ENCODE measurements at regions of chr10 and their contacts with region 1.

Region 1: DNA sequence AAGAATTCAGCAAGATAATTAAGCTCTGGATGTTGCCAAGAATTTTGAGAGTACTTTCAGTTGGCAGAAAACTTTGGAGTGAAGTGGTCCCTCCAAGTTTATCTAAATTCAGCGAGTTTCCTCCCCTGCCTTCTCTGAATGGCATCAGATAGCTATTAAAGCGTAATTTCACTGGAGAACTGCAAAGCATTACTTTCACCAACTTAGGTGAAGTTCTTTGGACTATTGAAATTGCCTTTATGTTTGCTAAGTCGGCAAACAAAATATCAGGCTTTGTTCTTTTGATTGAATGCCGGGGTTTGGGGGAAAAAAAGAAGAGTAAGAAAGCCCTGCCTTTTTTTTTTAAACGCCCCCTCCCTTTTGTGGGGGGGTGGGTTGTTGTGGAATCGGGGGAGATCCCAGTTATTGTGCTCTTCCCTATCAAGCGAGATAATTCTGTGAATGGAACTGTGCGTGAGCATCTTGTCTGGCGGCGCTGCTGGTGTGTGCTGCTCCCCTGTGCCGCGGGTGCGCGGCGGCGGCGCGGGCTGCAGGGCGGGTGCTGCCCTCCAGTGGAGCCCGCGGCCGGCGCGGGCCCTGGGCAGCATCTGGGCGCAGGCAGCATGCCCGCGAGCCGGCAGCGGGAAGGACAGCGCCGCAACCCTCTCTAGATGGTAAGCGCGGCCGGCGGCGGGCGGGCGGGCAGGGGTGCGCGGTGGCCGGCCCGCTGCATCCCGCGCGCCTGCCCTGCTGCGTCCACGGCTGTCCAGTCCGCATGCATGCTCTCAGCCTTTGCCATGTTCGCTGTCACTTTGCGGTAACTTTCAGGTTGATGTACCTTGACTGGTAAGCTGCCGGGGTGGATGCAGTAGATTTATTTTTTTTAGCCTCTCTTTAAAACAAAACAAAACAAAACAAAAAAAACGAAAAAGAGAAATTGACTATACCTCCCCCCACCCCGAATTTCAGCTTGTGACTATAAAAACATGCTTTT is 176.5 kb downstream of the TCF7L2 start:
- DNase-seq: peak; percentile 32 to 52
- ATAC-seq: peak; percentile 60 to 80
- H3K4me3 ChIP-seq: peak overlapping the region; percentile 18 to 40 (median 23)
- H3K27ac ChIP-seq: peak overlapping the region in 2 of 4 donors; percentile 30 to 44
- H3K4me1 ChIP-seq: peaks cover 4 to 5% of the 10 kb centered on the region in 2 donors
- H3K27me3 ChIP-seq: no peaks in the 10 kb centered on the region
- CTCF ChIP-seq: peak in 4 of 5 experiments; percentile 57 to 92 (median 75)
- POLR2A ChIP-seq: no peak

Region 2: DNA sequence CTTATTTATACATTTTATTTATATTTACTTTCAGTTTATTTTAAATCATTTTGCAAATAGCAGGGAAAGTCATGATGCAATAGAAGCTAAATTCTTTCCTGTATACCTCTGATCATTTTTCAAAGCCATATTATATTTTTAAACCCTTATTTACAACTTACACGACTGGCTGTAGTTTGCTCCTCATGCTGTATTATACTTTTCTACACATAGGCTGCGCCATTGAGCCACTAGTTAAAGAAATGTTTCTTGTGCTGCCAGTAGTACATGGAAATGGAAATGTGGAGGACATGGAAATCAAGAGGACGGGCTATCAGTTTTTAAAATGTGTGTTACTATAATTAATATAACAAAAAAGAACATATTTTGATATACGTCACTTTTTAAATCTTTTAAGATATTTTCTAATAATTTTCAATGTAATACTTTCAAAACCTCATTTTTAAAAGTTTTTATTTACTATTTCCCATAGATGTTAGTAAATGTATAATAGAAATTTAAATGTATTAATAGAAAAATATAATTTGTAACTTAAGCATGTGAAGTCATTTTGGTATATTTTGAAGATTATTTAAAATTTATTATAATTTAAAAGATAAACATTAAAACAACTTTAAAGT is 561.0 kb before region 1 on chr10:
- in situ Hi-C with region 1: loop called in 1 of 4 experiments (anchors 25 kb)
- intact Hi-C with region 1: no loop called
- DNase-seq: no peak
- ATAC-seq: peak in 1 of 2 donors; percentile 51
- H3K4me3 ChIP-seq: no peak overlapping the region
- H3K27ac ChIP-seq: no peak overlapping the region
- H3K4me1 ChIP-seq: no peaks in the 10 kb centered on the region
- H3K27me3 ChIP-seq: no peaks in the 10 kb centered on the region
- CTCF ChIP-seq: peak; percentile 22 to 47 (median 35)
- POLR2A ChIP-seq: no peak

Region 3: DNA sequence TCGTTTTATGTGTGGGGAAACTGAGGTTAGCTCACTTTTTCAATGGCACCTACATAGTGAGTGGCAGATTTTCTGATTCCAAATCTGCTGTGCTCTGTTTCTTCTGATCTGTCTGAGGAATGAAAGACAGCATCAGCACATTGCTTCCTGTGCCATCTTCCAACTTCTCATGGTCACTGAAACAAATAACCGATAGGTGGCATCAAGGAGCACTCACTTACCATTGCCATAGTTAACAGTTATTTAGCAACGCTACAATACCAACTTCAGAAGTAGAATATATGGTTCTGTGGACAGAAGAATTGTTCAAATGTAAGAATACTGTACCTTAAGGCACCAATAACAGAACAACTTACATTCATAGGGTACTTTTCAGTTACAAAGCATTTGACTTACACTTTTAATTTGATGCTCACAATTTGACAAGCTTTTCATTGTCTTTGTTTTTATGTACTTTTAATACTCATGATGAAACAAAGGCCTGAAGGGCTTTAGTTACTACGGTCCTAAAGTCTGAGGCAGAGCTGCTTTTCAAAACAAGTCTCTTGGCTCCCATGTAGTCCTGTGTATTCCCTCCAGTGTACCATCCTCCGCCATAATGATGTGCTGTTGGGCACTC is 405.3 kb before region 1 on chr10:
- in situ Hi-C with region 1: loop called in 3 of 4 experiments (anchors 10 to 25 kb)
- intact Hi-C with region 1: loop called (anchors 5 kb)
- DNase-seq: no peak
- ATAC-seq: peak in 1 of 2 donors; percentile 76
- H3K4me3 ChIP-seq: no peak overlapping the region
- H3K27ac ChIP-seq: no peak overlapping the region
- H3K4me1 ChIP-seq: no peaks in the 10 kb centered on the region
- H3K27me3 ChIP-seq: no peaks in the 10 kb centered on the region
- CTCF ChIP-seq: peak; percentile 24 to 62 (median 48)
- POLR2A ChIP-seq: no peak

Region 4: GRCh38 chr10:112949875-112950507 is 176.5 kb before region 1 on chr10 and contains the start of gene TCF7L2:
- in situ Hi-C with region 1: no loop called
- intact Hi-C with region 1: loop called (anchors 5 kb)
- DNase-seq: peak; percentile 88 to 92
- ATAC-seq: peak; percentile 71 to 77
- H3K4me3 ChIP-seq: peak within 1 kb of the TSS; percentile 77 to 84 (median 82)
- H3K27ac ChIP-seq: peak within 1 kb of the TSS; percentile 90 to 96 (median 94)
- H3K4me1 ChIP-seq: peaks cover 18 to 32% of the 10 kb centered on the region in 2 donors
- H3K27me3 ChIP-seq: no peaks in the 10 kb centered on the region
- CTCF ChIP-seq: no peak
- POLR2A ChIP-seq: peak; percentile 59 to 83
- total RNA-seq, gene TCF7L2: 4.6 to 5.1 (median 5.0) TPM

Region 5: DNA sequence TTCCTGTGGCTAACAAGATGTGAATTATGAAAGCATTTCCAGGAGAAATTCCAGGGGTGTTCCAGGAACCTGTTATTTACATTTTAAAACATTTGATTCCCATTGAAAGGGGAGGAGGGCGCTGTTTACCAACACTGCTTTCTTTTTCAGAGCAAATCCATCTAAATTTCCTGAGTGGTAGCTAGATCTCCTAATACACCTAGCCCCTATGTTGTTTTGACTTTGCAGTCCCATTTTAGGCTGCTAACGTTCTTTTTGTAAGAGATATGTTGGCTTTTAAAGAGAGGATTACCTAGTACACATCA is 45.6 kb before region 1 on chr10:
- in situ Hi-C with region 1: no loop called
- intact Hi-C with region 1: no loop called
- DNase-seq: no peak
- ATAC-seq: no peak
- H3K4me3 ChIP-seq: no peak overlapping the region
- H3K27ac ChIP-seq: no peak overlapping the region
- H3K4me1 ChIP-seq: peaks cover 0 to 3% of the 10 kb centered on the region in 2 donors
- H3K27me3 ChIP-seq: no peaks in the 10 kb centered on the region
- CTCF ChIP-seq: no peak
- POLR2A ChIP-seq: no peak

Region 6: GRCh38 chr10:113385021-113385999 is 258.8 kb after region 1 on chr10:
- in situ Hi-C with region 1: loop called in 1 of 4 experiments (anchors 25 kb)
- intact Hi-C with region 1: no loop called
- DNase-seq: peak; percentile 61 to 73
- ATAC-seq: peak; percentile 93 to 96
- H3K4me3 ChIP-seq: peak overlapping the region in 1 of 4 donors; percentile 35
- H3K27ac ChIP-seq: peak overlapping the region; percentile 40 to 57 (median 48)
- H3K4me1 ChIP-seq: peaks cover 0 to 4% of the 10 kb centered on the region in 2 donors
- H3K27me3 ChIP-seq: no peaks in the 10 kb centered on the region
- CTCF ChIP-seq: peak; percentile 45 to 80 (median 68)
- POLR2A ChIP-seq: no peak

Measured in gastrocnemius medialis (tissue), 4 donors.